ENCODE measurements at regions of chr14 and their contacts with region 1.

Region 1: DNA sequence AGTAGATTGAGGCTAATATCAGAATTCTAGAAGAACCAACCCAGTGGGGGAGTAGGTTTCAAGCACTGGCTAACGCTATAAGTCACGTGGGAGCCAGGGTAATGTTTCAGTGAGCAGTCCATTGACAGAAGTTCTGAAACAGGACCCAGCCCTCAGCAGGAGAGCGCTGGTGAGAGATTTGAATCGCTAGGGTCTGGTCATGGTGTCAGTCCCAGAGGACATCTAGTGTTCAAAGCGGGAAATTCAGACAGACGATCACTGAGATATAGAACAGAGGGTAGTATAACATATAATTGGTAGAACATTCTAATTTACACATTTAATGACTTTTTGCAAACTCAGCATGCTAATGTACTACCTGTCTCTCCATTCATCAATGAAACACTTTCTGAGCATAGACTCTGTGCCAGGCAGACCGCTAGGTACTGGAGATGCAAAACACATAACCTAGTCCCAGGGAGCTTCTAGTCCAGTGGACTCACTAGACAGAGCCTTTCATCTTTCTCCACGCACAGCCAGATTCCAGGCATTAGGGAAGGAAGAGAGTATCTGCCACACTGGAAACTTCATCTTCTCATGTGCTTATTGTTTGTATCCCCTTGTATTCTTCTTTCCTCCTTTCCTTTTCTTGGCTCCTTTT is 35.4 kb upstream of the RNASE3 start:
- DNase-seq: peak; percentile 61
- H3K4me3 ChIP-seq: no peak overlapping the region
- H3K27ac ChIP-seq: no peak overlapping the region
- H3K4me1 ChIP-seq: no peaks in the 10 kb centered on the region
- H3K27me3 ChIP-seq: no peaks in the 10 kb centered on the region
- CTCF ChIP-seq: peak; percentile 28 to 88 (median 80)
- POLR2A ChIP-seq: no peak

Region 2: GRCh38 chr14:20697273-20698017 is 158.3 kb before region 1 on chr14:
- intact Hi-C with region 1: loop called (anchors 5 kb)
- DNase-seq: peak; percentile 42
- H3K4me3 ChIP-seq: no peak overlapping the region
- H3K27ac ChIP-seq: no peak overlapping the region
- H3K4me1 ChIP-seq: no peaks in the 10 kb centered on the region
- H3K27me3 ChIP-seq: no peaks in the 10 kb centered on the region
- CTCF ChIP-seq: peak; percentile 42 to 84 (median 62)
- POLR2A ChIP-seq: no peak

Region 3: DNA sequence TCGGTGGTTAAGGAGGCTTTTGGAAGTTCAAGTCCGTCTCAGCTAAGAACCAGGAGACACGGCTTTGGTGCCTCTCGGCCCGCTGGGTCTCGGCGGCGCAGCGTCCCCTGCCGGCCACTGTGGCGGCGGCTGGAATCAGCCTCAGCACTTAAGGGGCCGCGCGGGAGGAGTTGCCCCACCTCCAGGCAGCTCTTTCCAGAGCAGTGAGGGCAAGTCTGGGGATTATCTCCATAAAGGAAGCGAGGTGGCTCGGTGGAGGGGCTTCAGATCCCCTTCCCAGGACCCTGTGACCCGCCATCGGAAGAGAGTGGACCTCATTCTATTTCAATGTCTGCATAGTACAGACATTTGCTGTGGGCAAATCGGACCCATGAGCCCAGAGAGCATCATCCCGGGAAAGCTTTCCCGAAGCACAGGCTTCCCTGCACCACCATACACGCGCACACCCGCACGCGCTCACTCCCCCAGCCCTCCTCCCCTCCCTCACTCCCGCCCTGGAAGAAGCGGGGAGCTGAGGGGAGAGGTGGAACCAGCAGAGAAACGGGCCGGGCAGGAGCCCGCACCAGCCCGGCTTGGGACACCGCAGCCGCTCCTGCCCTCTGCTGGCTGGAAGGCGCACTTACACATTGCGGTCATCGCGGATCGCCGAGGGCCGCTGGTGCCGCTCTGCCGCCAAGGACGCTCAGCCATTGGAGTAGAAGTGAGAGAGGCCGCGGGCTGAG is 115.4 kb after region 1 on chr14:
- intact Hi-C with region 1: loop called (anchors 5 kb)
- DNase-seq: peak; percentile 83
- H3K4me3 ChIP-seq: peak overlapping the region; percentile 32 to 49
- H3K27ac ChIP-seq: peak overlapping the region; percentile 40 to 60
- H3K4me1 ChIP-seq: no peaks in the 10 kb centered on the region
- H3K27me3 ChIP-seq: no peaks in the 10 kb centered on the region
- CTCF ChIP-seq: peak; percentile 46 to 95 (median 84)
- POLR2A ChIP-seq: no peak

Region 4: GRCh38 chr14:21039585-21040369 is 184.0 kb after region 1 on chr14:
- intact Hi-C with region 1: loop called (anchors 10 kb)
- DNase-seq: peak; percentile 66
- H3K4me3 ChIP-seq: no peak overlapping the region
- H3K27ac ChIP-seq: peak overlapping the region; percentile 77 to 80
- H3K4me1 ChIP-seq: peaks cover 14% of the 10 kb centered on the region
- H3K27me3 ChIP-seq: no peaks in the 10 kb centered on the region
- CTCF ChIP-seq: peak; percentile 36 to 82 (median 74)
- POLR2A ChIP-seq: no peak